Heart right ventricle (tissue), 16 donors: ENCODE measurements at regions of chr9 and their contacts with region 1.

Region 1: GRCh38 chr9:99140685-99141314 is 35.9 kb downstream of the TGFBR1 start:
- DNase-seq: peak in 1 of 2 donors; percentile 41
- ATAC-seq: peak; percentile 69 to 89 (median 86)
- H3K4me3 ChIP-seq: no peak overlapping the region
- H3K27ac ChIP-seq: peak overlapping the region in 1 of 10 donors; percentile 21
- H3K4me1 ChIP-seq: peaks cover 0 to 36% (median 17%) of the 10 kb centered on the region in 9 donors
- H3K27me3 ChIP-seq: no peaks in the 10 kb centered on the region
- CTCF ChIP-seq: peak; percentile 76 to 96 (median 86)

Region 2: DNA sequence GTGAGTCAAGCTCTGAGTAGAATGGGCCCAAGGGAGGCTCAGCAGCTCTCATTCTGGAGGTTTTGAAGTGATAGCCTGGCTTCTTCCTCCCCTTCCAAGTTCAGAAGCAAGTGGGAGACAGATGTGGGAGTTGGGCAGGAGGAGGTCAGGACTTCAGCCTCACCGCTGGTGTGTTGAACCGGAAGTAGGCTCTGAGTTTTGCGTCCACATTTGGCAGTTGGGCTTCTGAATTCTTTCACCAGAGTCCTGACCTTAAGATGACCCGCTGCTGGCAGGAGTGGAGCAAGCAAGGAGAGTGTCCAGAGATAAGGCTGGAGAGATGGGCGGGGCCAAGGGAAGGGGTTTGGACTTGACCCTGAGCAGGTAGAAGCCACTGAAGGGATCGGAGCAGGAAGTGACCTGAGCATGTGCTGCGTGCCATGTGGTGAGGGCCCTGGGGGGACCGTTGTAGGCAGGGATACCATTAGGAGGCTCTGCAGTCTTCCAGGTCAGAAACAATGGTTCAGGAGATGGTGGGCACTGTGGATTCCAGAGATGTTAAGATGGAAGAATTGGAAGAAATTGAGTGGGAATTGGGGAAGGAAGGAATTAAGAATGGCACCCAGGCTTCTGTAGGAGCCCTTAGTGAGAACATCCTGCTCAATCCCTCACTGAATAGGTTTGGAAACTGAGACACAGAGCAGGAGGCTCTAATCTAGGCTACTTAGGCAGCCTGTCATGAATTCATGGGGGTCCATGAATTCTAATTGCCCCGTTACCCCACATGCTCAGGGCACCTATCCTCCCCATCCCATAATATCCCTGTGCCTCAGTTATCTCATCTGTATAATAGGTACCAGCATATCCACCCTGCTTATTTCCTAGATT is 307.5 kb before region 1 on chr9:
- intact Hi-C with region 1: no loop called
- DNase-seq: peak; percentile 18 to 36
- ATAC-seq: peak in 4 of 8 donors; percentile 52 to 90 (median 62)
- H3K4me3 ChIP-seq: no peak overlapping the region
- H3K27ac ChIP-seq: no peak overlapping the region
- H3K4me1 ChIP-seq: peaks cover 0 to 7% (median 0%) of the 10 kb centered on the region in 9 donors
- H3K27me3 ChIP-seq: no peaks in the 10 kb centered on the region
- CTCF ChIP-seq: no peak

Region 3: GRCh38 chr9:98848450-98849149 is 292.2 kb before region 1 on chr9:
- intact Hi-C with region 1: loop called in 6 of 10 experiments (anchors 2 to 5 kb)
- DNase-seq: peak; percentile 89 to 92
- ATAC-seq: peak; percentile 95 to 99 (median 98)
- H3K4me3 ChIP-seq: peak overlapping the region; percentile 15 to 50 (median 35)
- H3K27ac ChIP-seq: peak overlapping the region in 6 of 10 donors; percentile 13 to 50 (median 40)
- H3K4me1 ChIP-seq: peaks cover 0 to 17% (median 6%) of the 10 kb centered on the region in 9 donors
- H3K27me3 ChIP-seq: peaks cover 0 to 3% (median 0%) of the 10 kb centered on the region in 7 donors
- CTCF ChIP-seq: peak; percentile 73 to 98 (median 95)

Region 4: DNA sequence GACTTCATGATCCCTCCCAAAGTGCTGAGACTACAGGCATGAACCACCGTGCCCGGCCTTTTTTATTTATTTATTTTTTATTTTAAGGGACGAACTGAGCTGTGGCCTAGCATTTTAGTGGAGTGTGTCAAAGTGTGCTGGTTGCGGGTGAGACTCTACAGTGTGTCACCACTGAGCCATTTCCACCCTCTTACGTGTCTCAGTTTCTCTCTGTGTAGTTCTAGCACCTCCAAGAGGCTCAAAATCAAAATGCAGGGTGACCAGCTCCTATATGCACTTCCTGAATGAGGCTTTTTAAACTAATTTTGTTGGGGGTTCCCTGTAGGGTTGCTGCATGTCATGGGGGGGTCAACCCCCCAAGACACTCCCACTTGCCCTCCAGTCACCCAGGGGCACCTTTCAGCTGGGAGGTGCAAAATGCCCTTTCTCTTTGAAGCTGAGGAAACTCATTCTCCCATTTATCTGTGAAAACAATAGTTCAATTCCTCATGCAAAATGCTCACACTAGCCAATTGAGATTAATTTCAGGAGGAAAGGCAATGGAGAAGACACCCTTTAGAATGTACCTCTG is 127.8 kb before region 1 on chr9:
- intact Hi-C with region 1: loop called in 4 of 10 experiments (anchors 5 to 10 kb)
- DNase-seq: no peak
- ATAC-seq: peak; percentile 58 to 89 (median 78)
- H3K4me3 ChIP-seq: no peak overlapping the region
- H3K27ac ChIP-seq: peak overlapping the region in 1 of 10 donors; percentile 24
- H3K4me1 ChIP-seq: peaks cover 0 to 6% (median 0%) of the 10 kb centered on the region in 9 donors
- H3K27me3 ChIP-seq: no peaks in the 10 kb centered on the region
- CTCF ChIP-seq: peak; percentile 29 to 69 (median 60)

Region 5: DNA sequence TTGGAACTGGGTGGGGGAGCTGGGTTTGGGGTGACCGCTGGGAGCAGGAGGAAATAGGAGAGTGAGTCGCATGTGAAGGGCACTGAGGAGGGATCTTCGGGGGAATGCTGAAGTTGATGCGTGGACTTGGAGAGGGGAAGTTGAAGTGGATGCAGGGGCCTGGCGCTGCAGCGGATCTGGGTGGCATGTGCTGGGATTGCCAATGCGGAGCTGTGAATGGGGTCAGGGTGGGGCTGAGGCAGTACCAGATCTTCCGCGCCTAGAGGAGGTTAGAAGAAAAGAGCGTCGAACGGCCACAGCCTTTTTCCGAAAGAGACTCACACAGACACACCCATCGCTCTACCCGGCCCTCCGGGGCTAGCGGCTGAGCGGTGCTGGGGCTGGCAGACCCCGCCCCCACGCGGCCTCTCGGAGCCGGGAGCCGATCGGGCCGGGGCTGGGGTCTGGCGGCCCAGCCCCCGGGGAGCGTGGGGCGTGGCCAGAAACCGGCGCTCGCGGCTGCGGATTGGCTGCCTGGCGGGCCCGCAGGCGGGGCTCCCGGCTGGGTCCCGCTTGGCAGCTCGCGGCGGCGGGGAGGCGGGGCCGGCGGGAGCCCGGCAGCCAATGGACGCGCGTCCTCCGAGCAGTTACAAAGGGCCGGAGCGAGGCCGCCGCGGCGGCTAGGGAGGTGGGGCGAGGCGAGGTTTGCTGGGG is 36.2 kb before region 1 on chr9 and contains the start of gene TGFBR1:
- intact Hi-C with region 1: loop called in 1 of 10 experiments (anchors 2 kb)
- DNase-seq: peak; percentile 92 to 95
- ATAC-seq: peak; percentile 90 to 97 (median 94)
- H3K4me3 ChIP-seq: peak within 1 kb of the TSS; percentile 52 to 96 (median 86)
- H3K27ac ChIP-seq: peak within 1 kb of the TSS; percentile 50 to 96 (median 89)
- H3K4me1 ChIP-seq: peaks cover 6 to 55% (median 45%) of the 10 kb centered on the region in 9 donors
- H3K27me3 ChIP-seq: no peaks in the 10 kb centered on the region
- CTCF ChIP-seq: peak in 3 of 9 donors; percentile 18 to 30 (median 27)
- total RNA-seq, gene TGFBR1: 10.7 to 25.4 (median 15.0) TPM